ENCODE measurements at regions of chr1 and their contacts with region 1.

Region 1: DNA sequence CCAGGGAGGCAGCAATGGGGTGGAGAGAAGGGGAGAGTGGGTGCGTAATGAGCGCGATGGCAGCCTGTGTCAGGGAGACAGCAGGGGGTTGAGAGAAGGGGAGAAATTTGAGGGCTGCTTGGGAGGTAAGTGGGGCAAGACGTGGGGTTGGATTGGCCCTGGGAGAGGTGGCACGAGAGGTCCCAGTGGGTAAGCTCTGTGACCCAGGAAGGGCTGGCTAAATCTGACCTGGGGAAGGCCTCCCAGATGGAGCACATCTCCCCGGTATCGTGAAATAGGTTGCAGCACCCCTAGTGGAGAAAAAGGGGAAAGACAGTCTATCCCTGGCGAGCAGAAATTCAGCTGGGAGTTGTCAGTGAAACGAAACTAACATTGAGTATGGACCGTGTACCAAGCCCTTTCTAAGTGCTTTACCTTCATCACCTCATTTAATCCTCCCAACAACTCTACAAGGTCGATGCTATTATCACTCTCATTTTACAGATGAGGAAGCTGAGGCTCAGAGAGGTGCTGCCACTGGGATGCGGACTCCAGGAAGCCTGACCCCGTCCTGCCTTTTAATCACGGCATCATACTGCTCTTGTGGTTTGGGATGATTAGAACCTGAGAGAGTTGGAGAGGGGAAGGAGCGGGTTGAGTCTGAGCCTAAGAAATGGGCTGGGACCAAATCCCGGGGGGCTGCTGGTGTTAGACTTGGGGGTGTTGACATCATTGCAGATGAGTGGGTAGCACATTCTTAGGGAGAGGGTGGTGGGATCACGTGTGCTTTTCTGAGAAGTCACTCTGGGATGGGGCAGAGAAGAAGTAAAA is 56.6 kb upstream of the RPL11 start:
- DNase-seq: peak; percentile 82

Region 2: GRCh38 chr1:23514111-23514679 is 120.9 kb before region 1 on chr1:
- CTCF ChIA-PET with region 1: no interaction called
- POLR2A ChIA-PET with region 1: no interaction called
- DNase-seq: no peak

Region 3: DNA sequence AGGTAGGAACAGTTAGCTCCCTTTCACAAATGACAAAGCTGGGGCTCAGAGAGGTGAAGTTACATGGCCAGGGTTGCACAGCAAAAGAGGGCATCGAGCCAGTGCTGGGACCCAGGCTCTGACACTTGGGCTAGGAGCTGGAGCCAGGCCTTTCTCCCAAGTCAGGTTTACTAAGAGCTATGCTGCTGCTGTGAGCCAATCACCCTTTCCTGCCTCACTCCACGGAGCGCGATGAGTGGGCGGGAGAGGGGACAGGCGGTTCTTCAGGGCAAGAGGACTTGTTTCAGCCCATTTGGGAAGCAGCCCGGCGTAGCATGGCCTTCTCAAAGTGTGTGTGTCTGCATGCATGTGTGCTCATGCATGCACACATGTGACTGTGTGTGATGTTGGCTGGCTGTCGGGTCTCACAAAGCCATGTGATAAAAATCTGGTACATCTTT is 86.3 kb before region 1 on chr1:
- CTCF ChIA-PET with region 1: interaction called, 51 read pairs
- POLR2A ChIA-PET with region 1: interaction called, 6 read pairs
- DNase-seq: no peak

Region 4: DNA sequence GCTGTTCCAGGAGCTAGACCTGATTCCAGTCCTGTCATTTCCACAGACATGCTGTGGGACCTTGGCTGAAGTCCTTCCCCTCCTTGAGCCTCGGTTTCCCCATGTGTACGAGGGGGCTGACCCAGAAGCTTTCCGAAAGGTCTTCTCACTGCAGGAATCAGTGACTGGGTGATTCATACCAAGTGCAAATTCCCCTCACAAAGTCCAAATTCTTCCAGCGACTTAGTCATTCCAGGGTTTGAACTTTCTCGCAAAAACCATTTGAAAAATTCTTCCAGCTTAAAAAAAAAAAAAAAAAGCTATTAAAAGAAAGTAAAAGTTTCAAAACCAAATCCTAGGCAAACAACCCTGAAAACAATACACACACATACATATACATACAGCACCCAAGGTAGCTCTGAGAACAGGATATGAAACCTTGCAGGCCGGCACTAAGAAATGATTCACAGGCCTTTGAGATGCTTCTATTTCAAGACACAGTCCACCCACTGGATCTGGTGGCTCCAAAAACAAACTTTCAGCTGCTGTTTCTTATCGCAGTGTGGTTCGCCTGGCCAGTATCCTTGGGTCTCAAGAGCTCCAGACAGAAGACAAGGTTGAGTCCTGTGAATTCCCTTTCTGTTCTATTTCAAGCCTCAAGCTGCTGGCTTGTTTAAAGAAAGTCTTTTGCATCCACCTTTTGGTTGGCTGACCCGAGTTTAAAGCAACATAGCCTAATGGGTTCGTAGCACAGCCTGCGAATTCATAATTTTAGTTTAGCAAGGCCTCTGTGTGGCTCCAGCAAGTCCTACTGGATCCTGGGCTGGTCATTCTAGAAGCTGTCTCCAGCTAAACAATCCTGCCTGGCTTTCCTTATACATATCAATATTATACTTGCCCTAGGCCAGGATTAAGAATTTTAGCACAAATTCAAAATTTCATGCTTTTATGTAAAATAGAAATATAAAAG is 57.7 kb before region 1 on chr1:
- CTCF ChIA-PET with region 1: interaction called, 10 read pairs
- POLR2A ChIA-PET with region 1: no interaction called
- DNase-seq: no peak

Region 5: GRCh38 chr1:23751050-23751814 is 116.2 kb after region 1 on chr1:
- CTCF ChIA-PET with region 1: no interaction called
- POLR2A ChIA-PET with region 1: no interaction called
- DNase-seq: peak; percentile 76